H1 (cell line): ENCODE measurements at regions of chr2 and their contacts with region 1.

Region 1: GRCh38 chr2:10225291-10226037 is 77.2 kb upstream of the HPCAL1 start:
- DNase-seq: no peak
- H3K4me3 ChIP-seq: no peak overlapping the region
- H3K27ac ChIP-seq: no peak overlapping the region
- H3K4me1 ChIP-seq: peaks cover 0 to 3% (median under 1%) of the 10 kb centered on the region in 4 experiments; a peak in 2 of 7 replicates
- H3K27me3 ChIP-seq: no peaks in the 10 kb centered on the region
- CTCF ChIP-seq: no peak
- EP300 ChIP-seq: no peak
- POLR2A ChIP-seq: no peak
- RAD21 ChIP-seq: no peak

Region 2: GRCh38 chr2:10239561-10239967 is 14.1 kb after region 1 on chr2:
- CTCF ChIA-PET with region 1: interaction called, 95 read pairs
- POLR2A ChIA-PET with region 1: interaction called, 3 read pairs
- DNase-seq: peak in 1 of 2 experiments; percentile 69
- H3K4me3 ChIP-seq: no peak overlapping the region
- H3K27ac ChIP-seq: no peak overlapping the region
- H3K4me1 ChIP-seq: peaks cover 0 to 3% (median 0%) of the 10 kb centered on the region in 4 experiments; a peak in 1 of 7 replicates
- H3K27me3 ChIP-seq: no peaks in the 10 kb centered on the region
- CTCF ChIP-seq: peak in 2 of 3 experiments; percentile 52 to 67; a peak in 3 of 4 replicates
- EP300 ChIP-seq: no peak
- POLR2A ChIP-seq: no peak
- RAD21 ChIP-seq: peak; percentile 35 to 55; a peak in 3 of 4 replicates

Region 3: DNA sequence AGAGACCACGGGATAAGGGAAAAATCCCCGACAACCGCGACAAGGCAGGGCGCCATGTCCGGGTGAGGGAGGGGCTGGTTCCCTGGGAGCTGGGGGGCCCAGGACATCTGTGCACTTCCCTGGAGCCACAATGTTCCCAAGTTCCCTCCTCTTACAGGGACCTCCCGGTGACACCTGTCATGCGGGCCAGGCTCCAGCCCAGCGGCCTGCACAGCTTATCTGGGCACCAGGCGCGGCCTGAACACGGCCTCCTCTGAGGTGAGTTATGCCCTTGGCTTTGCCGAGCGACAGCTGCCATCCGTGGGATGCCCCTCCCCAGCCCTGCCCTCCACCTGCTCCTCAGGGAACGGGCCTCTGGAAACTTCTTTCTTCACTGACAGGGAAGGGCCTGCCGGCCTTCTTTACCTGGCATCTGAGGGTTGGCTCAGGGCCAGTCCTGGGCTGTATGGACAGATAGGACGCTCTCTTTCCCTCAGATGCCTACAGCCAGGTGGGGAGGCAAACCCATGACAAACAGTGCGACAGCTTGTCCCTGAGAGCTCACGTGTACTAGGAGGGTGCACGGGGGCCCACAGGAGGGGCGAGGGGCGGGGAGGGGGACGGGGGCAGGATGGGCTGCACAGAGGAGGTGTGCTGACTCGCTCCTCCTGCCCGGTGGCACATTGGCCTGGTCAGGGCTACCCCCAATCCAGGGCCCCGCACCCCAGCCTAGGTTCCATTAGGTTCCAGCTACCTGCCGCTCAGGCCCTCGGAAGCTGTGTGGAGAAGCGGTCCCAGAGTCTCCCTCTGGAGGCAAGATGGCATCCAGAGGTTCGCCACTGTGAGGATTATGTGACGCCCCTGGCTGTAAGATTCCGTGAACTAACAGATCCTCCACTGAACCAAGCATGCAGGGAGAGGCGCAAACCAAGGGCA is 42.3 kb after region 1 on chr2:
- CTCF ChIA-PET with region 1: interaction called, 14 read pairs
- POLR2A ChIA-PET with region 1: no interaction called
- DNase-seq: no peak
- H3K4me3 ChIP-seq: no peak overlapping the region
- H3K27ac ChIP-seq: no peak overlapping the region
- H3K4me1 ChIP-seq: peaks cover 0 to 2% (median 0%) of the 10 kb centered on the region in 4 experiments; a peak in 1 of 7 replicates
- H3K27me3 ChIP-seq: no peaks in the 10 kb centered on the region
- CTCF ChIP-seq: peak; percentile 44 to 50 (median 49)
- EP300 ChIP-seq: no peak
- POLR2A ChIP-seq: no peak
- RAD21 ChIP-seq: peak; percentile 32 to 52; a peak in 3 of 4 replicates